ENCODE measurements at regions of chr13 and their contacts with region 1.

Region 1: GRCh38 chr13:102555917-102556553 is 40.8 kb upstream of the TPP2 start:
- DNase-seq: peak; percentile 56
- ATAC-seq: peak; percentile 64
- H3K4me3 ChIP-seq: no peak overlapping the region
- H3K27ac ChIP-seq: no peak overlapping the region
- H3K4me1 ChIP-seq: no peaks in the 10 kb centered on the region
- H3K27me3 ChIP-seq: peaks cover 30% of the 10 kb centered on the region
- CTCF ChIP-seq: peak; percentile 61

Region 2: DNA sequence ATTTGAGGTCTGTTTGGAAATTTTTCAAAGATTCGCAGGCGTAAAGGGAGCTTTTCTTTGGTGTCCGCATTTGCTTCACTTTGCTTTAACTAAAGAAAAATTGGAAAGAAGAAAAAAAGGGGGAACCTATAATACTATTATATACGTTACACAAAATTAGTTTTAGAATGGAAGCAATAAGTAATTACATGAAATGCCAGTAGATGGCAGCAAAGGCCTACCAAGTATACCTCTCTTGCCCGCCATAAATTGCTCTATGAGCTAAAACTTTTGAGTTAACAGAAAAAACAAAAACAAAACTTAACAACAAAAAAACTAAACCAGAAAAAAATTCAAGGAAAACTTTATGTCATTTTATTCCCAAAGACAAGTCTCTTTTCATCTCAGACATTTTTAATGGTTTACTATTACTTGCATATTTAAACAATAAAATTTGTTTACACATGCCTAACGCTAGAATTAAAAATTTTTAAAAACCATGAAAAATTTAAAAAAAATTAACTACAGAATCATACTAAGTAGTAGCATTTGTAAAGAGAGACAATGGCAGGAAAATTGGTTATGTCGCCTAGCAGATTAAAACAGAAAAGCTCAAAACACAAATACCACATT is 1411.1 kb before region 1 on chr13:
- CTCF ChIA-PET with region 1: no interaction called
- POLR2A ChIA-PET with region 1: no interaction called
- intact Hi-C with region 1: loop called (anchors 5 kb)
- DNase-seq: peak; percentile 74
- ATAC-seq: peak; percentile 68
- H3K4me3 ChIP-seq: no peak overlapping the region
- H3K27ac ChIP-seq: no peak overlapping the region
- H3K4me1 ChIP-seq: peaks cover 22% of the 10 kb centered on the region
- H3K27me3 ChIP-seq: no peaks in the 10 kb centered on the region
- CTCF ChIP-seq: peak; percentile 70

Region 3: GRCh38 chr13:101785858-101786257 is 770.2 kb before region 1 on chr13:
- CTCF ChIA-PET with region 1: no interaction called
- POLR2A ChIA-PET with region 1: no interaction called
- intact Hi-C with region 1: loop called (anchors 5 kb)
- DNase-seq: peak; percentile 59
- ATAC-seq: peak; percentile 96
- H3K4me3 ChIP-seq: no peak overlapping the region
- H3K27ac ChIP-seq: no peak overlapping the region
- H3K4me1 ChIP-seq: no peaks in the 10 kb centered on the region
- H3K27me3 ChIP-seq: peaks cover 36% of the 10 kb centered on the region
- CTCF ChIP-seq: peak; percentile 65

Region 4: GRCh38 chr13:101942038-101942437 is 614.0 kb before region 1 on chr13:
- CTCF ChIA-PET with region 1: interaction called, 6 read pairs
- POLR2A ChIA-PET with region 1: no interaction called
- intact Hi-C with region 1: loop called (anchors 5 kb)
- DNase-seq: peak; percentile 54
- ATAC-seq: peak; percentile 87
- H3K4me3 ChIP-seq: no peak overlapping the region
- H3K27ac ChIP-seq: no peak overlapping the region
- H3K4me1 ChIP-seq: no peaks in the 10 kb centered on the region
- H3K27me3 ChIP-seq: peaks cover 33% of the 10 kb centered on the region
- CTCF ChIP-seq: peak; percentile 57

Region 5: DNA sequence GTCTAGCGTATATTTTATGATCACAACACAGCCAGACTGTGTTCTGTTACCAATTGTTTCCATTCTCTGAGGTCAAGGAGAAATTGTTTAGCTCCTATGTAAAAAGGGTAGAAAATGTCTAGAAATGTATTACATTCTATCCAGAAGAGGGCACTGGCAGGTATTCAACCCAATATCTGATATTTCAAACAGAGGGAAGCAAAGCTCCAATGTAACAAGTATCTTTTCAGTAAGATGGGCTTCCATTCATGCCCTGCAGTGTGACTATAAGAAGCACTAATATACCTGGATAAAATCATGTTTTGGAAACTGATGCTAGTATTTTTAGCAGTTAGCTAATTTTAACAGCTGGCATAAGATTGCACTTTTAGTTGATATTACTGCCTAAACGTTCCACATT is 466.9 kb before region 1 on chr13:
- CTCF ChIA-PET with region 1: interaction called, 5 read pairs
- POLR2A ChIA-PET with region 1: no interaction called
- intact Hi-C with region 1: loop called (anchors 5 kb)
- DNase-seq: peak; percentile 11
- ATAC-seq: no peak
- H3K4me3 ChIP-seq: no peak overlapping the region
- H3K27ac ChIP-seq: no peak overlapping the region
- H3K4me1 ChIP-seq: no peaks in the 10 kb centered on the region
- H3K27me3 ChIP-seq: peaks cover 42% of the 10 kb centered on the region
- CTCF ChIP-seq: peak; percentile 38; the same call in 1 of the 2 replicates

Region 6: GRCh38 chr13:102128216-102128810 is 427.7 kb before region 1 on chr13:
- CTCF ChIA-PET with region 1: no interaction called
- POLR2A ChIA-PET with region 1: no interaction called
- intact Hi-C with region 1: no loop called
- DNase-seq: no peak
- ATAC-seq: no peak
- H3K4me3 ChIP-seq: no peak overlapping the region
- H3K27ac ChIP-seq: no peak overlapping the region
- H3K4me1 ChIP-seq: no peaks in the 10 kb centered on the region
- H3K27me3 ChIP-seq: peaks cover 54% of the 10 kb centered on the region
- CTCF ChIP-seq: no peak

Region 7: DNA sequence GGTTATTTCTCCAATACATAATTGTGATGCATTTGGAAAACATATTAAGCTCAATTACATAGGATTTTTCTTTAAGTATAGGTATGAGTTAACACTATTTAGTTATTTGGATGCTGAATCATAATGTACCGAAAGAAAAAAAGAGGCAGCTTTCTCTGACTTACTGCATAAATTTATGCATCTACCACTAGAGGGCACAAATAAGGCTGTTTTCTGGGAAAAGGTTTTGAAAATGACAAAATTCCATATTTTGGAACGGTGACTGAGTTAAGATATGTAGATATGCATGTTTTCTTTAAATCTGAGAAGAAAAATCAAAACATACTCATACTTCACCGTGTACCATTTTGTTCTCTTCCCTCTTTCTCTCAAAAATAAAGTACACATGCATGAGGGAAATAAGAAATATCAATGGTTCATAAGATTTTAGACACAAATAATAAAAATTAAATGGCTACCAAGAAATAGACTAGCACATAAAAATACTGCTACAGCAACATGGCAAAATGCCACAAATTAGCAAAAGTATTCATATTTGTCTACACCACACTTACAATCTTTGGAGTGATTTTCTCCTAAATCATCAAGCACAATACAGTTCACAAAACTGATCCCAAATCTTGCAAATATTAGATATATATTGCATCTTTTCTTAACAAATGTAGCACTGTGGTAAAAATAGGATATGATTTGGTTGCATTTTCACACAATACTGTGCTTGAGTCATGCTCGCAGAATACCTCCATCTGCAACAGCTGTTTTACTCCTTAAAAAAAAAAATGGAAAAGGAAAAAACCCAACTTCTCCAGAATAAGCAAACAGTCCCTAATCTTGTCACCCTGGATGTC is 414.2 kb before region 1 on chr13:
- CTCF ChIA-PET with region 1: interaction called, 7 read pairs
- POLR2A ChIA-PET with region 1: no interaction called
- intact Hi-C with region 1: loop called (anchors 1 kb)
- DNase-seq: peak; percentile 39
- ATAC-seq: peak; percentile 31; the same call in 1 of the 2 replicates
- H3K4me3 ChIP-seq: no peak overlapping the region
- H3K27ac ChIP-seq: no peak overlapping the region
- H3K4me1 ChIP-seq: no peaks in the 10 kb centered on the region
- H3K27me3 ChIP-seq: peaks cover 9% of the 10 kb centered on the region; the same call in 1 of the 2 replicates
- CTCF ChIP-seq: peak; percentile 72

Region 8: DNA sequence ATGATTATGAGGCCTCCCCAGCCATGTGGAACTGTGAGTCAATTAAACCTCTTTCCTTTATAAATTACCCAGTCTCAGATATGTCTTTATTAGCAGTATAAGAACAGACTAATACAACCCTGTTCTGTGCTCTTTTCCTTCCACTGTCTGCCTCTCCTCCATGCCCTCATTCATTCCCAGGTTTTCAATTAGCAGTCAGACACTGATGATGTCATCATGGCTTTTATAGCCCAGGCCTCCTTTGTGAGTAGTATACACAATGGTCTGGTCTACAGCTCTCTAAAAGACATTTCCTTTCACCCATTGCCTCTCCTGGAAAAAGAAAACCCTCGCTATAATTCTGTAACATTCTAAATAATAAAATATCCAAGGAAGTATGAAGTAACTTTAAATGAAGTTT is 179.7 kb before region 1 on chr13:
- CTCF ChIA-PET with region 1: no interaction called
- POLR2A ChIA-PET with region 1: no interaction called
- intact Hi-C with region 1: no loop called
- DNase-seq: no peak
- ATAC-seq: no peak
- H3K4me3 ChIP-seq: no peak overlapping the region
- H3K27ac ChIP-seq: no peak overlapping the region
- H3K4me1 ChIP-seq: no peaks in the 10 kb centered on the region
- H3K27me3 ChIP-seq: 0 out of 2 replicates have a peak, but pooled peaks cover 6% of the 10 kb centered on the region
- CTCF ChIP-seq: no peak